Activated naive CD4-positive, alpha-beta T cell treated with anti-CD3 and anti-CD28 coated beads, Interleukin-2, amount 10 ng/mL, durations not matched to agents 7 days and 5 days (primary cell): ENCODE measurements at regions of chr5 and their contacts with region 1.

Region 1: DNA sequence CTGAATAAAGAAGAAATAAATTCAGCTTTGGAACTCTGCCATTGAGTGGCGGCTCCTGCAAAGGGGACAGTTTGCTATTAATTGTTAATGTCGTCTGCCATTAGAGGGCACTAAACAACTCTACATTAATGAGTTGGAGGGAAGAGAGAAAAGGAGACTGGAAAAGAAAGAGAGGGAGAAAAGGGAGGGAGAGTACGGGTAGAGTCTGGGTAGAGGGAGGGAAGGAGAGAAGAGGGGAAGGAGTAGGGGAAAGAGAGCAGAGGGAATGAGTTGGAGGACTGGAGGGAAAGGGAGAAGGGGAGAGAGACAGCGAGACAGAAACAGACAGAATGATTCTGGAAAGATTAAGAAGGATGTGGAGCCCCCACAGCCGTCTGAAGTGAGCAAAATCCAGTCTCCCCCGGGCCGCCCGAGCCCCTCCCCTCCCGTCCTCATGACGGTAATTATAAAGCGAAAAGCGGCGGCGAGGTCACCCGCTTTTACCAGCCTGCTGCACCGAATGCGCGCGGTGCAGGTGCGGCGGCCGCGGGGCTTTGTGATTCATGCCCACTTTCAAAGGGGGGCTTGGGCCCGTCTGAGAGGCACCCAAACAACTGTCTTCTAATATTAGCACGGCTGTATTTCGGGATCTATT is 1.9 kb upstream of the FST start:
- DNase-seq: peak; percentile 23
- H3K4me3 Mint-ChIP-seq: peak overlapping the region; percentile 57
- H3K27ac Mint-ChIP-seq: no peak overlapping the region
- H3K4me1 Mint-ChIP-seq: peaks cover 40% of the 10 kb centered on the region
- H3K27me3 Mint-ChIP-seq: peaks cover 67% of the 10 kb centered on the region

Region 2: GRCh38 chr5:53549792-53550191 is 71.3 kb after region 1 on chr5:
- CTCF ChIA-PET with region 1: no interaction called
- DNase-seq: no peak
- H3K4me3 Mint-ChIP-seq: no peak overlapping the region
- H3K27ac Mint-ChIP-seq: no peak overlapping the region
- H3K4me1 Mint-ChIP-seq: no peaks in the 10 kb centered on the region
- H3K27me3 Mint-ChIP-seq: peaks cover 6% of the 10 kb centered on the region

Region 3: GRCh38 chr5:53560506-53561191 is 82.1 kb after region 1 on chr5 and contains the start of gene NDUFS4:
- CTCF ChIA-PET with region 1: no interaction called
- DNase-seq: peak; percentile 88
- H3K4me3 Mint-ChIP-seq: peak within 1 kb of the TSS; percentile 97
- H3K27ac Mint-ChIP-seq: peak within 1 kb of the TSS; percentile 92
- H3K4me1 Mint-ChIP-seq: peaks cover 32% of the 10 kb centered on the region
- H3K27me3 Mint-ChIP-seq: peaks cover 18% of the 10 kb centered on the region

Region 4: GRCh38 chr5:54234304-54234933 is 755.9 kb after region 1 on chr5:
- CTCF ChIA-PET with region 1: interaction called, 17 read pairs
- DNase-seq: no peak
- H3K4me3 Mint-ChIP-seq: no peak overlapping the region
- H3K27ac Mint-ChIP-seq: no peak overlapping the region
- H3K4me1 Mint-ChIP-seq: peaks cover 3% of the 10 kb centered on the region
- H3K27me3 Mint-ChIP-seq: peaks cover 3% of the 10 kb centered on the region